ENCODE measurements at regions of chr19 and their contacts with region 1.

Region 1: GRCh38 chr19:10251792-10252694 is at the start of gene MRPL4:
- DNase-seq: peak; percentile 97
- ATAC-seq: peak; percentile 99
- H3K4me3 Mint-ChIP-seq: peak within 1 kb of the TSS; percentile 97
- H3K27ac Mint-ChIP-seq: peak within 1 kb of the TSS; percentile 97
- H3K4me1 Mint-ChIP-seq: peaks cover 18% of the 10 kb centered on the region
- H3K27me3 Mint-ChIP-seq: no peaks in the 10 kb centered on the region
- total RNA-seq, gene MRPL4: 130 to 140 TPM

Region 2: GRCh38 chr19:10074153-10074552 is 177.9 kb before region 1 on chr19:
- CTCF ChIA-PET with region 1: no interaction called
- POLR2A ChIA-PET with region 1: no interaction called
- intact Hi-C with region 1: loop called in 1 of 2 experiments (anchors 1 kb)
- DNase-seq: peak; percentile 70
- ATAC-seq: peak; percentile 90
- H3K4me3 Mint-ChIP-seq: no peak overlapping the region
- H3K27ac Mint-ChIP-seq: no peak overlapping the region
- H3K4me1 Mint-ChIP-seq: no peaks in the 10 kb centered on the region
- H3K27me3 Mint-ChIP-seq: peaks cover 1% of the 10 kb centered on the region

Region 3: DNA sequence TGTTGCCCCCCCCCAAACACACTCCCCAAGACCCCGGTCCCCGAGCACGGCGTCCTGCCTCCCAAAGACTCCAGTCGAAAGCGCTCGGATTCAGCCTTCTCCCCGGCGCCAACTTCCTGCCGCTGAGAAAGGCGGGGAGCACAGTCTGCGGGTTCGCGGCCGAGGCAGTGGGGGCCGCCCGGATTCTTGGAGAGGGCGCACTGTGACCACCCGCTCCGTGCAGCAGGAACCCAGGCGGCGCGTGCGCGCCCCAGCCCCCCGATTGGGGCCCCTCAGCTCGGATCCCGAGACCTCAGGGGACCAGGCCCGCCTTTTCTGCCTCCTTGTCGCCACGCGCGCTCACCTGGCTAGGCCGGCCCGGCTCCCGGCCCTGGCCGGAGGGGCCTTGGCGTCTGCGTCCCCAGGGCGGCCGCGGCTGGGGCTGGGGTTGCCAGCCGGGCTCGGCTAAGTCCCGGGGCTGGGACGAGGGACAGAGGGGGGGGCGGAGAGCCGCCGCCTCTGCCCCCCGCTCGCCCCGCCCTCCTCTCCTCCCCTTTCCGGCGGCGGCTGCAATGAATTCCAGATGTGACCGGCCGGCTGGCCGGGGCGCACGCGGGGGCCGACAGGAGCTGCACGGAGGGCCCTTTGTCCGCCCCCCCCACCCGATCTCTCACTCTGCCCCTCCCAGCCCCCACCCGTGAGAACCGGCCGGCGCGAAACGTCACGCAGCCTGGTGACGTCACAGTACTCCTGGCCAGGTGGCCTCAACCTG is 21.0 kb before region 1 on chr19 and contains the start of gene S1PR2:
- CTCF ChIA-PET with region 1: interaction called, 18 read pairs
- POLR2A ChIA-PET with region 1: no interaction called
- intact Hi-C with region 1: loop called (anchors 1 to 2 kb)
- DNase-seq: peak; percentile 83
- ATAC-seq: peak; percentile 62
- H3K4me3 Mint-ChIP-seq: peak within 1 kb of the TSS; percentile 81
- H3K27ac Mint-ChIP-seq: peak within 1 kb of the TSS; percentile 84
- H3K4me1 Mint-ChIP-seq: peaks cover 24% of the 10 kb centered on the region
- H3K27me3 Mint-ChIP-seq: no peaks in the 10 kb centered on the region
- total RNA-seq, gene S1PR2: 8.1 to 9.0 TPM

Region 4: DNA sequence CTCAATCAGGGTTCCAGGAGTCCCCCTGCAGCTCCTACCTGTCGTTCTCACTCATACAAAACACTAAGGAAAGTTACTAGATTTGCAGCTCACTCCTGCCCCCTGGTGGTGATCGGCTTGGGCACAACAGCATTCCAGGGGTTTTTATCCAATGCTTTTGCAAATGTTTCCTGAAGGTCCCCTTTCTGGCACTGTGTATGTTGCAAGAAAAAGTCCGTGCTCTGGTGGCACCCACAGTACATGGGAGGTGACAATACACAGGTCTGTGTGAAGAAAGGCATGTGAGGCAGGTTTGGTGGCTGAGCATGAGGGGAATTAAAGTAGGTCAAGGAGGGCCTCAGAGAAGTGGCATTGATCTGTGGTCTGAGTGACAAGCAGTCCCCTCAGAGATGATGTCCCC is 136.9 kb after region 1 on chr19:
- CTCF ChIA-PET with region 1: interaction called, 101 read pairs
- POLR2A ChIA-PET with region 1: no interaction called
- intact Hi-C with region 1: no loop called
- DNase-seq: peak; percentile 89
- ATAC-seq: peak; percentile 57
- H3K4me3 Mint-ChIP-seq: no peak overlapping the region
- H3K27ac Mint-ChIP-seq: no peak overlapping the region
- H3K4me1 Mint-ChIP-seq: no peaks in the 10 kb centered on the region
- H3K27me3 Mint-ChIP-seq: no peaks in the 10 kb centered on the region

Measured in activated CD4-positive, alpha-beta T cell treated with anti-CD3 and anti-CD28 coated beads for 36 hours (primary cell).